ENCODE measurements at regions of chr20 and their contacts with region 1.

Region 1: DNA sequence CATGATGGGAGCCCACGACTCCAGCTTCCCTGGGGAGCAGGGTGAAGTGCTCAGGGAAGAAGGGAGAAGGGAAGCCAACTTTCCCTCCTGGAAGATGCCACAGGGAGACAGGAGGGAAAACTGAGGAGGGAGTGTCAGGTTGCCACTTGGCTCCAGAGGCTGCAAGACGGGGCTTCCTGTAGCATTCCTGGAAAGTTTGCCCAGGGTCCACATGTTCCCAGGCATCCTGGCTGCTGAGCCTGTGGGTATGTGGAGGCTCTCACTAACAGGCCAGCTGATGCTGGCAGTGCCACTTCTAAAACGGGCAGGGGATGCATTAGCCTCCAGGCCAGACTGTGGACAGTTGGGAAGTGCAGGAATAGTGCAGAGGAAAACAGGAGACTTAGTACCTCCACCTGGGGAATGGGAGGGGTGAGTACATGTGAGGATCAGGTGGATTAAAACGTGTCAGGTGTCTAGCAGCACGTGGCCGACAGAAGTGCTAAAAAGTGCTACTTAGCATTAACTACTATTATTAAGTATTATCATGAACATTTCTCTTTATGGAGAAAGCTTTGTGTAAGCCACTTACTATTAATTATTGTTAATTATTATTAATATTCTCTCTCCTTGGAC is 33.2 kb downstream of the BANF2 start:
- DNase-seq: no peak
- H3K4me3 ChIP-seq: no peak overlapping the region
- H3K4me3 Mint-ChIP-seq: no peak overlapping the region
- H3K27ac Mint-ChIP-seq: no peak overlapping the region
- H3K4me1 ChIP-seq: peaks cover 9% of the 10 kb centered on the region; the same call in 1 of the 2 replicates
- H3K4me1 Mint-ChIP-seq: peaks cover 19% of the 10 kb centered on the region
- H3K27me3 ChIP-seq: no peaks in the 10 kb centered on the region
- H3K27me3 Mint-ChIP-seq: no peaks in the 10 kb centered on the region
- CTCF ChIP-seq: no peak

Region 2: DNA sequence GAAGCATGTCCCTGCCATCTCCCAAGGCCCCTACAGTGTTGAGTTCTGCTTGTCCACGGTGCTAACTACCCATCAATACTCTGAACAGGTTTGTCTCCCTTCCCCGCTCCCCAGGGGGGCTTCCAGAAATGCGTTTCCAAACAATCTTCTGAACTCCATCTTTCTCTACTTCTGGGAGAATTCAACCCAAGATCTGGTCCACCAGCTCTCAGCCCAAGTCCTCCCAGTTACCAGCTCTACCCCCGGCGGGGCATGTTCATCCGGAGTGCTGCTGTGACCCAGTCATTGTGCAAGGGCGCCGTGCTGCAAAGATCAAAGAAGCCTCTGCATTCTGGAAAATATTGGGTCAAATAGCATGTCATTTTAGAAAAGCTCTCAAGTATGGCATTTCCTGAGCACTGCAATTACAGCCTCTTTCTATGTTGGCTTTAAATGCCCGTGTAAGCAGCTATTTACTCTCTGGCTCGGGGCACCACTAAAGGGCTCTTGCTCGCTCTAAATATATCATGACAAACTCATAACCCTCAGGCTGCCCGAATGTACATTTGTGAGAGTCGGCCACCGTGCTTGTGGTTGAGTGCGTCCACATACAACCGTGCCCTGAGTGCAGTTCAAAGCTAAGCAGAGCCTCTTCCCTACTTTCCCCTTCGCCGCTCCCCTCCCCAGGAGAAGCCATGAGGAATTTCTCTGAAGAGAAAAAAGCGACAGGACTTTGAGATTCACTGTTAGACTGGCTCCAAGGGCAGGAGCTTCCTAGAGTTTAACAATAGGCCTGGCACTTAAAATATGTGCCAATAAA is 38.4 kb after region 1 on chr20:
- CTCF ChIA-PET with region 1: no interaction called
- POLR2A ChIA-PET with region 1: no interaction called
- intact Hi-C with region 1: no loop called
- DNase-seq: peak in 1 of 2 experiments; percentile 30
- H3K4me3 ChIP-seq: no peak overlapping the region
- H3K4me3 Mint-ChIP-seq: peak overlapping the region; percentile 11
- H3K27ac Mint-ChIP-seq: peak overlapping the region; percentile 53
- H3K4me1 ChIP-seq: peaks cover 17% of the 10 kb centered on the region
- H3K4me1 Mint-ChIP-seq: peaks cover 18% of the 10 kb centered on the region
- H3K27me3 ChIP-seq: no peaks in the 10 kb centered on the region
- H3K27me3 Mint-ChIP-seq: no peaks in the 10 kb centered on the region
- CTCF ChIP-seq: no peak

Region 3: DNA sequence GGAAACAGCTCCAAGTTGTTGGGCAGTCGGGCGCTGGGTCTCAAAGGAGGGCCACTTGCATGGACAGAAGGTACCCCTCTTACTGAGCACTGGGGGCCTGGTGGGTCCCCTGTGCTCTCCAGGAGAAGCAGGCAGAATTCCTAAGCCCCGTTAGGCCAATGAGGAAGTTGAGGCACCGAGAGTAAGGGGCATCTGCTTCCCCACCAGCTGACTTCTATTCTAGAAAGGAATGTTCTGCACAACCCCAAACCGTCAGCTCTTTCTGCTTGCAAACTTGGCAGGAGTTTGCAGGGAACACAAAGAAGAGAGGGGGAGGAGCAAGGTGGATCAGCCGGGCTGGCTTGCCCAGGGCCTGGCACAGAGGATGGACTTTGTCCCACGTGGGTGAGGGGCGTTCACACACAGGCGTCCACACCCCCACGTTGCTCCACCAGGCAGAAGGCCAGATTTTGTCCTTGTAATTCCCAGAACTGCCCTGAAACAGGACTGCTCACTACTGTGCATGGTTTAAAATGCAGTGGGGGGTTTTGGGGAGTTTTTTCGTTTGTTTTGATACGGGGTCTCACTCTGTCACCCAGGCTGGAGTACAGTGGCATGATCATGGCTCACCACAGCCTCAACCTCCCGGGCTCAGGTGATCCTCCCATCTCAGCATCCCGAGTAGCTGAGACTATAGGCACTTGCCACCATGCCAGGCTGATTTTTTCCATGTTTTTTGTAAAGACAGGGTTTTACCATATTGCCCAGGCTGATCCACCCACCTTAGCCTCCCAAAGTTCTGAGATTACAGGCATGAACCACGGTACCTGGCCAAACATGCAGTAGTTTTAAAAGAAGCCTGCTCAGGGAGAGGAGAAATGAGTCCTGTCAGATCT is 142.3 kb after region 1 on chr20:
- CTCF ChIA-PET with region 1: no interaction called
- POLR2A ChIA-PET with region 1: no interaction called
- intact Hi-C with region 1: loop called (anchors 5 kb)
- DNase-seq: peak; percentile 51 to 61
- H3K4me3 ChIP-seq: no peak overlapping the region
- H3K4me3 Mint-ChIP-seq: no peak overlapping the region
- H3K27ac Mint-ChIP-seq: no peak overlapping the region
- H3K4me1 ChIP-seq: peaks cover 50% of the 10 kb centered on the region
- H3K4me1 Mint-ChIP-seq: peaks cover 43% of the 10 kb centered on the region
- H3K27me3 ChIP-seq: no peaks in the 10 kb centered on the region
- H3K27me3 Mint-ChIP-seq: no peaks in the 10 kb centered on the region
- CTCF ChIP-seq: no peak